Common myeloid progenitor, CD34-positive (primary cell): ENCODE measurements at regions of chr19 and their contacts with region 1.

Region 1: DNA sequence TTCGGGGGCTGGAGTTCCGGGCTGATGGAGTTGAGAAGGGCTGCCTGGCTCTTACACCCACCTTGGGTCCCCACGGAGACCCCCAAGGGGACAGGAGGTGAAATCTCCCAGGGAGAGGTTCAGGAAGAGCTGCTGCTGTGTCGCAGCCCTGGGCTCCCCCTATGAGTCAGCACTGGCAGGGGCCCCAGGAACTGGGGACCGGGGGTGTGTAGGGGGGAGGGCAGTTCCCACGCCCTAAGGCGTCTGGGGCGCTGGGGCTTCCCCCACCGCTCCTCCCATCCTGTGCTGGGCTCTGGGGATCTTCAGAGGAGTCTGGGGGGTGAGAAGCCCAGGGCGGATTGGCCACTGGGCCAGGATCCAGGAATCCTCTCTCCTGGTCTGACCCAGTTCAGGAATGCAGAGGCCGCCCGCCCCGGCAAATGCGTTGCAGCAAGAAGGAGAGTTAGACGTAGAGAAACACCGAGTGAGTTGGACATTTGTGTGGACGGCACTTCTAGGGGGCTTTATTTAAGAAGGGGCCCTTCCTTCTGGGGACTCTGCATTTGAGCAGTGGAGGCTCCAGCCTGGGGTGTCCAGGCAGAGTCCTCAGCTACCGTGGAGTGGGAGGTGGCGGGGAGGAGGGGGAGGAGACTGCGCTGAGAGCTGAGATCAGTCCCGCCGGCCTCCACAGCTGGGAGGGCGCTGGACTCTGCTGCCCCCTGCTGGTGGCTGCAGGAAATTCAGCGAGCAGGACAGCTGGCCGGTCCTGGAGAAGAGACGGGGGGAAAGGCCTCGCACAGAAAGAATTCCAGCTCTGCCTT is 15.0 kb upstream of the NANOS3 start:
- DNase-seq: peak; percentile 83 to 94 (median 93)
- H3K4me3 ChIP-seq: peak overlapping the region; percentile 40 to 88 (median 67)
- H3K27ac ChIP-seq: peak overlapping the region; percentile 94 to 96
- H3K4me1 ChIP-seq: peaks cover 3 to 51% (median 43%) of the 10 kb centered on the region in 4 experiments
- H3K27me3 ChIP-seq: no peaks in the 10 kb centered on the region

Region 2: DNA sequence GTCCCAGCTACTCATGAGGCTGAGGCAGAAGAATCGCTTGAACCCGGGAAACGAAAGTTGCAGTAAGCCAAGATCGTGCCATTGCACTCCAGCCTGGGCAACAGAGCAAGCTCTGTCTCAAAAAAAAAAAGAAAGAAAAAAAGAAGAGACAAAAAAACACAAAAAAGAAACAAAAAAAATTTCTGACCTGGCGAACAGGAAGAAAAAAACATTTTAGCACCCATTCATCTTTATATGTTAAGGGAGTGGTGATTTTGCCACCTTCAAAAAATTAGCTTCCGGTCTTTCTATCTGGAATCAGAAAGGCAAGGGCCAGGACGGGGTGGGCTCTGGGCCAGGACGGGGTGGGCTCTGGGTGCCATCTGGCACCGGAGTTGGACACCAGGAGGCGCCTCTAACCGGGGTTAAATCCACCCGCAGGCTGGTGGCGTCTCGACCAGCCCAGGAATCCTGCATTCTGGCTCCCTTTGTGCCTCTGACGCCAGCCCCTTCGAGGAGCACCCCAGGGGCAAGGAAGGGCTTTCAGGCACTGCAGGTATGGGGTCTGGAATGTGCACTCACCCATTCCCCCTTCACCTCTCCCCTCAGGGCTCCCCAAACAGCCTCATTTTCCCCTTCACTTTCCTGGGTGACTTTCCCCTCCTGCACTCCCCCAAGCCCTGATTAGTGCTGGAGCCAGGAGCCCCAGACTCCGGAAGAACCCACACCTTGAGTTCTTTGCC is 77.0 kb before region 1 on chr19:
- CTCF ChIA-PET with region 1: interaction called, 32 read pairs
- POLR2A ChIA-PET with region 1: interaction called, 9 read pairs
- DNase-seq: peak; percentile 70 to 78 (median 75)
- H3K4me3 ChIP-seq: peak overlapping the region in 1 of 7 experiments; percentile 38
- H3K27ac ChIP-seq: no peak overlapping the region
- H3K4me1 ChIP-seq: peaks cover 2 to 42% (median 37%) of the 10 kb centered on the region in 4 experiments
- H3K27me3 ChIP-seq: no peaks in the 10 kb centered on the region

Region 3: GRCh38 chr19:13794757-13795589 is 67.0 kb before region 1 on chr19 and contains the start of gene ZSWIM4:
- CTCF ChIA-PET with region 1: interaction called, 3 read pairs
- POLR2A ChIA-PET with region 1: interaction called, 10 read pairs
- DNase-seq: peak; percentile 98 to 99 (median 99)
- H3K4me3 ChIP-seq: peak within 1 kb of the TSS; percentile 70 to 94 (median 81)
- H3K27ac ChIP-seq: peak within 1 kb of the TSS; percentile 50 to 86
- H3K4me1 ChIP-seq: peaks cover 10 to 40% (median 26%) of the 10 kb centered on the region in 4 experiments
- H3K27me3 ChIP-seq: no peaks in the 10 kb centered on the region

Region 4: DNA sequence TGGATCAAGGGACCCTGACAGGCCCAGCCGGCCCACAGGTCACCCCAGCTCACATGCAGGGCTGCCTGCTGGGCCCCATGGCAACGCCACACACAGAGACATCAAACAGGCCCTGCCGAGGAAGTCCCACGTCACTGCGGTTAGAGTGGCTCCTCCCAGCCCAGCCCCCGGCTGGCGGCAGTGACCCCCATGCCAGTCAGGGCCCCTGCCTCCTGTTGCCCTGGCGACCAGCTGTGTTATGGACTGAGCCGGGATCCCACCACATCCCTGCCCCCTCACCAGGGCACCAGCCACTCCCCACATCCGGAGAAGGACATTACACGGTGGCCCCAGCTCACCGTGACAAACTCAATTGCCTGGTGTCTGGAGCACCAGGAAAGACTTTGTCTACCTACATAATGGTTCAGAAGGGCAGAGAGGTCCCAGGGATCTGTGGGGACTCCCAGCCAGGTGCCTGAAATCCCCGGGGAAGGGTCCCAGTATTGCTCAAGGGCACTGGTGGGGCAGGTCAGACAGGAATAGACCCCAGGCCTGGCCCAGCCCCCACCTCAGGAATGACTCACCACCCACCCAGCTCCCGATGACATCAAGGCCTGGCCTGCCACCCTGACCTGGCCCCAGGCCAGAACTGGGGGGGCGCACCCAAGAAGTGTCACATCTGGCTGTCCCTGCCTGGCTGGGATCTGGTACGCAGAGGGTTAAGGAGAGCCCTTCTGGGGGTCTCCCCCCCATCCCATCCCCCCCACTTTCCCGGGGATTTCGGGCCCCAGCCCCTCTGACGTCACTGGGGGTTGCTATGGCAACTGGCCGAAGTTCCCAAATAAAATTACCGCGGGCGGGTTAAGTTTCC is 15.2 kb before region 1 on chr19:
- CTCF ChIA-PET with region 1: interaction called, 147 read pairs
- POLR2A ChIA-PET with region 1: interaction called, 555 read pairs
- DNase-seq: peak; percentile 99 to 100 (median 99)
- H3K4me3 ChIP-seq: peak overlapping the region; percentile 23 to 73 (median 54)
- H3K27ac ChIP-seq: peak overlapping the region; percentile 100
- H3K4me1 ChIP-seq: peaks cover 8 to 81% (median 75%) of the 10 kb centered on the region in 4 experiments
- H3K27me3 ChIP-seq: no peaks in the 10 kb centered on the region

Region 5: GRCh38 chr19:13872695-13873389 is 10.9 kb after region 1 on chr19:
- CTCF ChIA-PET with region 1: interaction called, 16 read pairs
- POLR2A ChIA-PET with region 1: interaction called, 5 read pairs
- DNase-seq: peak; percentile 85 to 94 (median 92)
- H3K4me3 ChIP-seq: peak overlapping the region; percentile 18 to 76 (median 48)
- H3K27ac ChIP-seq: peak overlapping the region in 1 of 2 experiments; percentile 49
- H3K4me1 ChIP-seq: peaks cover 0 to 23% (median 15%) of the 10 kb centered on the region in 4 experiments
- H3K27me3 ChIP-seq: no peaks in the 10 kb centered on the region

Region 6: DNA sequence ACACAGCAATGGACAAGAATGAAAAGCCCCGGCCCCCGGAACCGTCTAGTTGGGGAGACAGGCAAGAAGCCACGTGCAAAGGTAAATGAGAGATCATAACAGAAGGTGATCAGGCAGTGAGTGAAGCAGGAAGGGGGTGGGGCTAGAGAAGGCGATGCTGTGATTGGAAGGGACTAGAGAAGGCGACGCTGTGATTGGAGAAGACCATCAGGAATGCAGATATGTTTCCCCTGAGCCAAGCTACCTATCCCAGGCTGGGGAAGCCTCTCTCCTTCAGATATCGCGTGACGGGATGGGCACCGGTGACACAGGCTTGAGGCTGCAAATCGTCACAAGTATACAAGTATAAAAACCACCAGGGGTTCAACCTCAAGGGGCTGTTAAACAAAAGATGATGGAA is 112.1 kb after region 1 on chr19:
- CTCF ChIA-PET with region 1: no interaction called
- POLR2A ChIA-PET with region 1: no interaction called
- DNase-seq: peak in 1 of 3 donors; percentile 35
- H3K4me3 ChIP-seq: no peak overlapping the region
- H3K27ac ChIP-seq: no peak overlapping the region
- H3K4me1 ChIP-seq: peaks cover 0 to 14% (median 11%) of the 10 kb centered on the region in 4 experiments
- H3K27me3 ChIP-seq: no peaks in the 10 kb centered on the region